HAP-1 (cell line): ENCODE measurements at regions of chr17 and their contacts with region 1.

Region 1: GRCh38 chr17:47229535-47230443 is 20.6 kb downstream of the MYL4 start:
- DNase-seq: peak; percentile 76 to 87
- H3K4me3 ChIP-seq: no peak overlapping the region
- H3K4me1 ChIP-seq: peaks cover 5% of the 10 kb centered on the region; the same call in 1 of the 2 replicates
- H3K27me3 ChIP-seq: no peaks in the 10 kb centered on the region

Region 2: DNA sequence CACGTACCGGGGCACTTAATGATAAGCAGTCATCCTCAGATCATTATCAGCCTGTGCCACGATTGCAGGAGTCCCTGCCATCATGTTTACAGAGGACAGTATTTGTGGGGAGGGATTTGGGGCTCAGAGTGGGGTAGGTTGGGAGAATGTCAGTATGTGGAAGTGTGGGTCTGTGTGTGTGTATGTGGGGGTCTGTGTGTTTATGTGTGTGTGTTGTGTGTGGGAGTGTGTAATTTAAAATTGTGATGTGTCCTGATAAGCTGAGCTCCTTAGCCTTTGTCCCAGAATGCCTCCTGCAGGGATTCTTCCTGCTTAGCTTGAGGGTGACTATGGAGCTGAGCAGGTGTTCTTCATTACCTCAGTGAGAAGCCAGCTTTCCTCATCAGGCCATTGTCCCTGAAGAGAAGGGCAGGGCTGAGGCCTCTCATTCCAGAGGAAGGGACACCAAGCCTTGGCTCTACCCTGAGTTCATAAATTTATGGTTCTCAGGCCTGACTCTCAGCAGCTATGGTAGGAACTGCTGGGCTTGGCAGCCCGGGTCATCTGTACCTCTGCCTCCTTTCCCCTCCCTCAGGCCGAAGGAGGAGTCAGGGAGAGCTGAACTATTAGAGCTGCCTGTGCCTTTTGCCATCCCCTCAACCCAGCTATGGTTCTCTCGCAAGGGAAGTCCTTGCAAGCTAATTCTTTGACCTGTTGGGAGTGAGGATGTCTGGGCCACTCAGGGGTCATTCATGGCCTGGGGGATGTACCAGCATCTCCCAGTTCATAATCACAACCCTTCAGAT is 80.6 kb after region 1 on chr17:
- in situ Hi-C with region 1: loop called (anchors 5 kb)
- DNase-seq: no peak
- H3K4me3 ChIP-seq: no peak overlapping the region
- H3K4me1 ChIP-seq: no peaks in the 10 kb centered on the region
- H3K27me3 ChIP-seq: no peaks in the 10 kb centered on the region